ENCODE measurements at regions of chr22 and their contacts with region 1.

Region 1: GRCh38 chr22:31080848-31081649 is at the start of gene SMTN:
- DNase-seq: peak; percentile 93
- ATAC-seq: peak; percentile 81
- H3K4me3 Mint-ChIP-seq: peak within 1 kb of the TSS; percentile 86
- H3K27ac Mint-ChIP-seq: peak within 1 kb of the TSS; percentile 82
- H3K4me1 Mint-ChIP-seq: peaks cover 36% of the 10 kb centered on the region
- H3K27me3 Mint-ChIP-seq: no peaks in the 10 kb centered on the region
- total RNA-seq, gene SMTN: 35.6 to 51.2 TPM

Region 2: GRCh38 chr22:30763815-30764686 is 317.0 kb before region 1 on chr22:
- CTCF ChIA-PET with region 1: interaction called, 22 read pairs
- DNase-seq: peak; percentile 74
- ATAC-seq: peak; percentile 87
- H3K4me3 Mint-ChIP-seq: no peak overlapping the region
- H3K27ac Mint-ChIP-seq: no peak overlapping the region
- H3K4me1 Mint-ChIP-seq: peaks cover 2% of the 10 kb centered on the region
- H3K27me3 Mint-ChIP-seq: no peaks in the 10 kb centered on the region

Region 3: DNA sequence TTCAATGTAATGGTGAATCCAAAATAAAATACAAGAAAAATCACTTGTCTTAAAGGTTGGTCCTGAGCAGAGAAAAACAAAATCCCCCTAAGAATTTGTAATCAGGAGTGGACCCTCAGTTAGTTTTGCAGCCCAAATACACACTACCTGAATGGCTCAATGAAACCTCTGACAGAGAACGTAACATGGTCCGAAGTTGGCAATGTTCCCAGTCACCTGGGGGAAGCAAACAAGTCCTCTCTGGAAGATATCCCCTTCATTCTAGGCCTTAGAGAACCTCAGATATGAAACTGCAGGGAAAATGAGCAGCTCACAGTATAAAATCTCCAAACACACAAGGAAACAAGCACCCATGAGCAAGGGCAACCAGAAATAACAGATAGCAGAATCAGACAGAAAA is 170.7 kb before region 1 on chr22:
- CTCF ChIA-PET with region 1: no interaction called
- DNase-seq: no peak
- ATAC-seq: no peak
- H3K4me3 Mint-ChIP-seq: no peak overlapping the region
- H3K27ac Mint-ChIP-seq: no peak overlapping the region
- H3K4me1 Mint-ChIP-seq: no peaks in the 10 kb centered on the region
- H3K27me3 Mint-ChIP-seq: no peaks in the 10 kb centered on the region

Region 4: DNA sequence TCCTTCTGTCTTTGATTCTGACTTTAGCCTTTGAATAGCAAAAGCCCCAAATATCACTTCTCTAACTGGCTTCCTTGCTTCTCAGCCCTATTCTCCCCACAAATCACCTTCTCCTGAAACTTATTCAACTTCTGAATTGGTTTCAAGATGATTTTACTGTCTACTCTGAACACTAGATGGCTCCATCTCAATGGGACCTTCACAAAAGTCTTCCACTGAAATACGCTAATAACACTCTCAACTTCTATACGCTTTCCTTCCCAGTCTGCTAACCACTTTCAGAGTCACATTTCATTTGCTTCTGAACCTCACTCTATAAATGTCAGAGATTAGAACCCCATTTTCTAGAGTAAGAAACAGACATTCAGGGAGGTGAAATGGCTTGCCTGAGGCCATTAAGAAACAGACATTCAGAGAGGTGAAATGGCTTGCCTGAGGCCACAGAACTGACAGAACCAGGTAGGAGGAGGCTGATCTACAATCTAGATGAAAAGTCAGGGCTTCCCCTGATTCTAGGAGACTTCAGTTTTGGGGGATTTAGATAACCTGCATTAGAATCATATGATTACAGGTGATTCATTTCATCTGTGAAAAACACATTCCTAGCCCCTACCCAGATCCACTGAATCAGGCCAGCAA is 133.1 kb before region 1 on chr22:
- CTCF ChIA-PET with region 1: interaction called, 21 read pairs
- DNase-seq: no peak
- ATAC-seq: no peak
- H3K4me3 Mint-ChIP-seq: no peak overlapping the region
- H3K27ac Mint-ChIP-seq: no peak overlapping the region
- H3K4me1 Mint-ChIP-seq: peaks cover 49% of the 10 kb centered on the region
- H3K27me3 Mint-ChIP-seq: no peaks in the 10 kb centered on the region

Region 5: DNA sequence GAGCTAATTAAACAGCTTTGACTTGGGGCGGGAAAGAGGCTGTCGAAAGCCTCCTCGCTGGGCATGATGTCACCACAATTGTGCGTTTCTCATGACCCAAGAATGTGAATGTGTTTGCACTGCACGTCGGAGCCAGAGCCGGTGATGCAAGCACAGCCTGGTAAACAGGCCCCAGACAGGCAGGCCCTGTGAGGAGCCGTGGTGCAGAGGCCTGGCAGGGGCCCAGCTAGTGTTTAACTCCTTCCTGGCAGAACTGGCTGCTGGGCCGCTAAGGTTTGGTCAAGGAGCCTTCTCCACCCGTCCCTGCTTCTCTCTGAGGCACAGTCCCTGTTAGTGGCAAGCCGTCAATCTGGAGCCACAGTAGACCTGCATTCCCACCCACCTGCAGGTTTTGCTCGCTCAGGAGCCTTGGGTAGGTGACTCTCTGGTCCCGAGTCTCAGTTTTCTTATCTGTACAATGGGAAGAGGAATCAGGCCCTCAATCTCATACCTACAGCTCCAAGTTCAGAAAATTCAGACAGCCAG is 25.4 kb before region 1 on chr22:
- CTCF ChIA-PET with region 1: no interaction called
- DNase-seq: no peak
- ATAC-seq: no peak
- H3K4me3 Mint-ChIP-seq: no peak overlapping the region
- H3K27ac Mint-ChIP-seq: no peak overlapping the region
- H3K4me1 Mint-ChIP-seq: no peaks in the 10 kb centered on the region
- H3K27me3 Mint-ChIP-seq: no peaks in the 10 kb centered on the region

Region 6: GRCh38 chr22:31096657-31097279 is 15.7 kb after region 1 on chr22:
- CTCF ChIA-PET with region 1: interaction called, 10 read pairs
- DNase-seq: no peak
- ATAC-seq: no peak
- H3K4me3 Mint-ChIP-seq: no peak overlapping the region
- H3K27ac Mint-ChIP-seq: no peak overlapping the region
- H3K4me1 Mint-ChIP-seq: no peaks in the 10 kb centered on the region
- H3K27me3 Mint-ChIP-seq: no peaks in the 10 kb centered on the region

Region 7: DNA sequence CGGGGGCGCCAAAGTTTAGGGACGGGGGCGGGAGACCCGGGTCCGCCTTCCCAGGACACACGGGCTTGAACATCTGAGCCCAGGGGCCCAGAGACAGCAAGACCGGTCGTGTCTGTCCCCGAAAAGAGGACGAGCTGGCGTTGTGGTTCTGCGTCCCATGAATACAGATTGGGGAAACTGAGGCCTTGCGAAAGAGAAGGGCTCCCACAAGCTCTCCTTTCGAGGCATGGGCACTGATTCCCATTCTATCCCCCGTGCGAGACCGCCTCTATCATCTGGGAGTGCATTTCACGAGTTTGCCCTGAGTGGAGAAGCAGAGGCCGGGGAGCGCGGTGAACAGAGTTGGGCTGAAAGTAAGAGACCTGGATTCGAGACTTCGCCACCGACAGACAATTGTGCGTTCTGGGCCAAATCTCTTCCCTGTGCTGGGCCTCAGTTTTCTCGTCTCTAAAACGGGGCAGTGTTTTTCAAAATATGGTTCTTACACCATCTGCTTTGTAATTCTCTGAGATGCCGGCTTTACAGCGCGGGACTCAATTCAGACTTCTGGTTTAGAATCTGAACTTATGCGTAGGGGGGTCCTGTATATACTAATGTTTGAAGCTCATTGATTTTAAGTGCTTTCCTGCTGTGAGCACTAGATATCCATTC is 79.4 kb after region 1 on chr22:
- CTCF ChIA-PET with region 1: interaction called, 14 read pairs
- DNase-seq: peak; percentile 47
- ATAC-seq: peak; percentile 30
- H3K4me3 Mint-ChIP-seq: peak overlapping the region; percentile 96
- H3K27ac Mint-ChIP-seq: peak overlapping the region; percentile 96
- H3K4me1 Mint-ChIP-seq: peaks cover 28% of the 10 kb centered on the region
- H3K27me3 Mint-ChIP-seq: peaks cover 4% of the 10 kb centered on the region